ENCODE measurements at regions of chr15 and their contacts with region 1.

Region 1: DNA sequence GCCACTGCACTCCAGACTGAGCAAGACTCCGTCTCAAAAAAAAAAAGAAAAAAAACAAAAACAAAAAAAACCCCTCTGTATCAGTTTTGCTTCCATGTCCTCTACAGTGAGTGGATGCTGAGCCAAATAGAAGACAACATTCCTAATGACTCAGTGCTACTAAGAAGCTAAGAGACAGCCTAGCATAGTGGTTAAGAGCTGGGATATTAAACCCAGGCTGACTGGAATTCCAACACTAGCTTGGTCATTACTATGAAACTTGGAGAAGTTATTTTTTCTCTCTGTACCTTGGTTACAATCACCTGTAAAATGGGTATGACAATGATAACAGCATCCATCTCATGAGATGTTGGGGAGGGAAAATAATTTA is 60.9 kb upstream of the PYGO1 start:
- DNase-seq: no peak
- H3K4me3 ChIP-seq: no peak overlapping the region
- H3K27ac ChIP-seq: no peak overlapping the region
- H3K4me1 ChIP-seq: no peaks in the 10 kb centered on the region
- H3K27me3 ChIP-seq: no peaks in the 10 kb centered on the region
- CTCF ChIP-seq: no peak
- POLR2A ChIP-seq: no peak

Region 2: DNA sequence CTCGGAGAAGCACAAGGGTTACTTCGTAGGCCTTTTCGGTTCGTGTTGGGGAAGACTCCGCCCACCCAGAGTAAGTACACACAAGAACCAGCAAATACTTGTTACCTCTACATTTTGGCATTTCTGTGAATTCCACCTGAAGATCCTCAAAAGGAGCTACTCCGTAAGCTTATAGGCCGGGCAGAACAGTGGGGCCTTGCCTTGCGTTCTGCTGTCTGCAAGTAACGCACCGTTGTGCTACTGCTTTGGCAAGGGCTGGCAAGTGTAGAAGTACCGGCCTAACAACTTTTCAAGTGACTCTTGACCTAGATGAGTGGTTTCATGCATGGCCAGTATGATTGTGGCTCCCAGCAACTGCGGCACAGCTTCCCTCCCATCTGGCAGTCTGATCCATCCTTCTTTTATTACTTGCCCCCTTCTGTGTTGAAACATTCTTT is 134.6 kb before region 1 on chr15:
- CTCF ChIA-PET with region 1: interaction called, 10 read pairs
- POLR2A ChIA-PET with region 1: no interaction called
- dilution Hi-C with region 1: no loop called
- intact Hi-C with region 1: no loop called
- DNase-seq: no peak
- H3K4me3 ChIP-seq: no peak overlapping the region
- H3K27ac ChIP-seq: no peak overlapping the region
- H3K4me1 ChIP-seq: no peaks in the 10 kb centered on the region
- H3K27me3 ChIP-seq: no peaks in the 10 kb centered on the region
- CTCF ChIP-seq: no peak
- POLR2A ChIP-seq: no peak

Region 3: DNA sequence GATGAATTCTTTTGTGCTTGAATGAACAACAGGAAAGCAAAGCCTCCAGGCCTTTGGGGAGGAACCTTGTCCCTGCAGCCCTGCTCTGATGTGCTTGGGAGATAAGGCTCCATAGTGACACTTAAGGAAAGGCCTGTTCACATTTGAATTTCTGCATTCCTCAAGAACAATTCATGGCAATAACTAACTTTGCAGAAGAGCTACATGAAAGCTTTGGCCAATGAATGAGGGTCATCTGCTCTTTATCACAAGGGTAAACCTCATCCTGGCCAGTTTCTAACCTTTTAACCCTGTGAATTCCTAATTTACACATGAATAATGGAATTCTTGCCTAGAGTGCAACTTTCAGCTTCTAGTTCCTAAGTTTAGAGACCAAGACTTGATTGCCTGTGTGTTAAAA is 88.3 kb after region 1 on chr15:
- CTCF ChIA-PET with region 1: interaction called, 10 read pairs
- POLR2A ChIA-PET with region 1: no interaction called
- dilution Hi-C with region 1: no loop called
- intact Hi-C with region 1: loop called (anchors 2 kb)
- DNase-seq: peak; percentile 74
- H3K4me3 ChIP-seq: no peak overlapping the region
- H3K27ac ChIP-seq: no peak overlapping the region
- H3K4me1 ChIP-seq: peaks cover 30% of the 10 kb centered on the region
- H3K27me3 ChIP-seq: no peaks in the 10 kb centered on the region
- CTCF ChIP-seq: no peak
- POLR2A ChIP-seq: no peak

Region 4: GRCh38 chr15:55775316-55775715 is 126.3 kb after region 1 on chr15:
- CTCF ChIA-PET with region 1: interaction called, 10 read pairs
- POLR2A ChIA-PET with region 1: no interaction called
- dilution Hi-C with region 1: no loop called
- intact Hi-C with region 1: no loop called
- DNase-seq: no peak
- H3K4me3 ChIP-seq: no peak overlapping the region
- H3K27ac ChIP-seq: no peak overlapping the region
- H3K4me1 ChIP-seq: no peaks in the 10 kb centered on the region
- H3K27me3 ChIP-seq: peaks cover 5% of the 10 kb centered on the region in 2 experiments
- CTCF ChIP-seq: no peak
- POLR2A ChIP-seq: no peak

Region 5: GRCh38 chr15:55846116-55846707 is 197.2 kb after region 1 on chr15:
- CTCF ChIA-PET with region 1: interaction called, 58 read pairs
- POLR2A ChIA-PET with region 1: no interaction called
- dilution Hi-C with region 1: no loop called
- intact Hi-C with region 1: loop called (anchors 1 kb)
- DNase-seq: peak; percentile 87
- H3K4me3 ChIP-seq: no peak overlapping the region
- H3K27ac ChIP-seq: no peak overlapping the region
- H3K4me1 ChIP-seq: no peaks in the 10 kb centered on the region
- H3K27me3 ChIP-seq: no peaks in the 10 kb centered on the region
- CTCF ChIP-seq: peak; percentile 66 to 69
- POLR2A ChIP-seq: no peak

Region 6: GRCh38 chr15:55993111-55993803 is 344.2 kb after region 1 on chr15 and contains the start of gene NEDD4:
- CTCF ChIA-PET with region 1: no interaction called
- POLR2A ChIA-PET with region 1: no interaction called
- dilution Hi-C with region 1: no loop called
- intact Hi-C with region 1: loop called (anchors 5 kb)
- DNase-seq: peak; percentile 92
- H3K4me3 ChIP-seq: peak within 1 kb of the TSS; percentile 79 to 97 (median 93)
- H3K27ac ChIP-seq: peak within 1 kb of the TSS; percentile 68
- H3K4me1 ChIP-seq: peaks cover 20% of the 10 kb centered on the region
- H3K27me3 ChIP-seq: no peaks in the 10 kb centered on the region
- CTCF ChIP-seq: peak; percentile 35 to 76
- POLR2A ChIP-seq: peak; percentile 75
- total RNA-seq, gene NEDD4: 34.2 and 39.0 TPM in 2 replicates

Region 7: GRCh38 chr15:56245871-56246814 is 597.1 kb after region 1 on chr15:
- CTCF ChIA-PET with region 1: no interaction called
- POLR2A ChIA-PET with region 1: no interaction called
- dilution Hi-C with region 1: no loop called
- intact Hi-C with region 1: loop called (anchors 2 kb)
- DNase-seq: peak; percentile 86
- H3K4me3 ChIP-seq: peak overlapping the region in 2 of 3 experiments; percentile 16 to 32
- H3K27ac ChIP-seq: no peak overlapping the region
- H3K4me1 ChIP-seq: peaks cover 22% of the 10 kb centered on the region
- H3K27me3 ChIP-seq: peaks cover 0 to under 1% of the 10 kb centered on the region in 2 experiments
- CTCF ChIP-seq: peak; percentile 100
- POLR2A ChIP-seq: peak; percentile 24

Measured in endothelial cell of umbilical vein (primary cell).